Mammary epithelial cell (primary cell): ENCODE measurements at regions of chr1 and their contacts with region 1.

Region 1: GRCh38 chr1:30399026-30399425 is 324.4 kb downstream of the MATN1 start:
- DNase-seq: no peak
- H3K4me3 ChIP-seq: no peak overlapping the region
- H3K27ac ChIP-seq: no peak overlapping the region
- H3K4me1 ChIP-seq: no peaks in the 10 kb centered on the region
- H3K27me3 ChIP-seq: no peaks in the 10 kb centered on the region
- CTCF ChIP-seq: no peak

Region 2: GRCh38 chr1:29703596-29704370 is 695.2 kb before region 1 on chr1:
- CTCF ChIA-PET with region 1: no interaction called
- dilution Hi-C with region 1: no loop called
- in situ Hi-C with region 1: no loop called
- intact Hi-C with region 1: no loop called
- DNase-seq: peak; percentile 45
- H3K4me3 ChIP-seq: no peak overlapping the region
- H3K27ac ChIP-seq: no peak overlapping the region
- H3K4me1 ChIP-seq: peaks cover 16% of the 10 kb centered on the region
- H3K27me3 ChIP-seq: no peaks in the 10 kb centered on the region
- CTCF ChIP-seq: peak; percentile 91 to 95

Region 3: DNA sequence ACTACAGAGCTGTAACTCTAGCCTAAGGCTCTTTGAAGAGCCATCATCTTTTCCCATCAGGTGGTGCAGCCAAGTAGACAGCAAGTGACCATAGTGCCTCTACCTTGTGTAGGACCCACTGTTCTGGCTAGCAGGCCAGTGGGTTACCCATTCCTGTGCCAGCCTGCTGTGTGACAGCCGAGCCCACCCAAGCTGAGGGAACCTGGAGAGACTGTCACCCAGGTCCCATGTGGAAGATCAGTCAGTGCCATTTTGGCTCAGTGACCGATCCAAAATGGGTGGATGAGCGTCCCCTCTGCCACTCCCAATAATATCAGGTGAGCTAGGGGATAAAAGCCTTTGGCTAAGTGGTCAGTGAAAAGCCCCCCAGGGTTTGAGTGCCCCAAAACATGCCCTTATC is 93.5 kb before region 1 on chr1:
- CTCF ChIA-PET with region 1: no interaction called
- dilution Hi-C with region 1: loop called (anchors 5 kb)
- in situ Hi-C with region 1: no loop called
- intact Hi-C with region 1: no loop called
- DNase-seq: no peak
- H3K4me3 ChIP-seq: no peak overlapping the region
- H3K27ac ChIP-seq: no peak overlapping the region
- H3K4me1 ChIP-seq: no peaks in the 10 kb centered on the region
- H3K27me3 ChIP-seq: no peaks in the 10 kb centered on the region
- CTCF ChIP-seq: no peak

Region 4: GRCh38 chr1:30484668-30485067 is 85.6 kb after region 1 on chr1:
- CTCF ChIA-PET with region 1: no interaction called
- dilution Hi-C with region 1: loop called (anchors 5 kb)
- in situ Hi-C with region 1: no loop called
- intact Hi-C with region 1: no loop called
- DNase-seq: no peak
- H3K4me3 ChIP-seq: no peak overlapping the region
- H3K27ac ChIP-seq: no peak overlapping the region
- H3K4me1 ChIP-seq: no peaks in the 10 kb centered on the region
- H3K27me3 ChIP-seq: no peaks in the 10 kb centered on the region
- CTCF ChIP-seq: no peak

Region 5: DNA sequence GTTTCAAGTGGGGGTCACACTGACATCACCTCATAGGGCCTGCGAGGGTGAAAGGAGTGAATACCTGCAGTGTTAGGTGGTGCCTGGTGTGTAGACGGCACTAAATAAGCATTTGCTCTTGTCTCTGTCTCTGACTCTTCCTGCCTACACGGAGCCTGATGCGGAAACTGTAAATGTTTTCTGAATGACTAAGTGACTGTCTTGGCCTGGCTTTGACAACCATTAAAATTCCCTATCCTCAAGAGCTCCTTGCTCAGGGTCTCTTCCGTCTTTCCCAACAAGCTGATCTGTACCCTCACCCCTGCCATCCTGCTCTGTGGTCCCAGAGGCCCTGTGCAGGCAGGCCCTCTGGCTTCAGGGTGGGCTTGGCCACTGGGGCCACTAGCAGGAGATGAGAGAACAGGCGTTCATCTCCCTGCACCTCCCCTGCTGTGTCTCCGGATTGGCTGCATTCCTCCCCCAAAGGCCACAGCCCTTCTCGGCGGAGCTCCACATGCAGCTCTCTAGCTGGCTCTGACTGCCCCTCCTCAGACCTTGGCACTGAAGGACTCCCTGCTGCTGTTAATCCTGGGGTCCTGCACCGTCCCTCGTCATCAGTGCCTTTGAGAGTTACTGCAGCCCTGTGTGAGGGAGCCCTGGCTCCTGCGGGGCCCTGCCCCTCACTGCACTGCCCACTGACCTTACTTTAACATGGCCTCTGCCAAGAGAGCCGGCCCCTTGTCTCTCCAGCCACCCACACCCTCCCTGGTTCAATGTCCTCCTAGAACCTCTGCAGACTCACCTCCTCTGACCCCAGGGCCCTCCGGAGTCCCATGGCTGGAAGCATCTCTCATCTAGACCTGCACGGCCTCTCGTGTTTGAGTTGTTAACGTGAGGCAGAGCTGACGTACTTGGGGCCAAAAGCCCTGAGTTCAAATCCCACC is 113.2 kb after region 1 on chr1:
- CTCF ChIA-PET with region 1: no interaction called
- dilution Hi-C with region 1: no loop called
- in situ Hi-C with region 1: no loop called
- intact Hi-C with region 1: no loop called
- DNase-seq: no peak
- H3K4me3 ChIP-seq: no peak overlapping the region
- H3K27ac ChIP-seq: no peak overlapping the region
- H3K4me1 ChIP-seq: no peaks in the 10 kb centered on the region
- H3K27me3 ChIP-seq: no peaks in the 10 kb centered on the region
- CTCF ChIP-seq: no peak